Calu3 (cell line): ENCODE measurements at regions of chr20 and their contacts with region 1.

Region 1: GRCh38 chr20:44137210-44137801 is 49.7 kb downstream of the JPH2 start:
- DNase-seq: no peak
- H3K4me3 Mint-ChIP-seq: no peak overlapping the region
- H3K27ac Mint-ChIP-seq: no peak overlapping the region
- H3K4me1 Mint-ChIP-seq: no peaks in the 10 kb centered on the region
- H3K27me3 Mint-ChIP-seq: peaks cover 69% of the 10 kb centered on the region
- CTCF ChIP-seq: no peak

Region 2: GRCh38 chr20:43749734-43750294 is 387.5 kb before region 1 on chr20:
- CTCF ChIA-PET with region 1: no interaction called
- intact Hi-C with region 1: no loop called
- DNase-seq: peak; percentile 97
- H3K4me3 Mint-ChIP-seq: no peak overlapping the region
- H3K27ac Mint-ChIP-seq: no peak overlapping the region
- H3K4me1 Mint-ChIP-seq: peaks cover 10% of the 10 kb centered on the region
- H3K27me3 Mint-ChIP-seq: peaks cover 62% of the 10 kb centered on the region
- CTCF ChIP-seq: peak; percentile 100

Region 3: GRCh38 chr20:44170816-44171410 is 33.6 kb after region 1 on chr20:
- CTCF ChIA-PET with region 1: no interaction called
- intact Hi-C with region 1: loop called (anchors 5 kb)
- DNase-seq: no peak
- H3K4me3 Mint-ChIP-seq: no peak overlapping the region
- H3K27ac Mint-ChIP-seq: no peak overlapping the region
- H3K4me1 Mint-ChIP-seq: peaks cover 10% of the 10 kb centered on the region
- H3K27me3 Mint-ChIP-seq: peaks cover 65% of the 10 kb centered on the region
- CTCF ChIP-seq: no peak